ENCODE measurements at regions of chr10 and their contacts with region 1.

Region 1: GRCh38 chr10:24360282-24361127 is 151.6 kb downstream of the KIAA1217 start:
- DNase-seq: peak; percentile 49
- H3K4me3 ChIP-seq: no peak overlapping the region
- H3K27ac ChIP-seq: no peak overlapping the region
- H3K27me3 ChIP-seq: no peaks in the 10 kb centered on the region
- CTCF ChIP-seq: peak; percentile 87

Region 2: DNA sequence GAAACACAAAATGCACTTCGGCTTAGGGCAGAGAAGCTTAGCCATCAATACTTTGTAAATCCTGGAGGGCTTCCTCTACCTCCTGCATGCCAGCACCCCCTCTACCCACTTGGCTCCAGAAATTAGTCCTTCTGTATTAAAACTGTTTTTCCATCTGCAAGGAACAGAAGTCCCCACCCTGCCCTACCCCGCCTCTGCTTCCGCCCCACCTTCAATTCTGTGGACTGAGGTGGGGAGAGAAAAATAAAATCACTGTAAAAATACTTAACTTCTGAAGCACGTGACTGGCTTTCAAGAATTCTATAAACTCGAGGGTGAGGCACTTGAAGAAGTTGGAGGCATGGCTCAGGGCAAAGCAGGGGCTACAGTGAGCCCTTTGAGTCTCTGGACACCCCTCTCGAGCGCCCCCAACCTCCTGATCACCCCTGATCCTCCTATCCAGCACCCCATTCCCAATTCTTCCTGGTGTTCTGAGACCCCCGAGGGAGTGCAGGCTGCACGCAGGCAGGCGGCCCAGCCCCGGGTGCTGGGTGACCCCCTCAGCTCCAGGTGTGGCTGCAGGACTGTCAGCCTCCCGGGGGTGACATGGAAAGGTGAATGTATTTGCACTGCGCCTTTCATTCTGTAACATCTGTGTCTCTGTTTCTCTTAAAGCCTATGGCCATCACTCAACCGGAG is 158.9 kb before region 1 on chr10:
- CTCF ChIA-PET with region 1: interaction called, 15 read pairs
- POLR2A ChIA-PET with region 1: no interaction called
- DNase-seq: no peak
- H3K4me3 ChIP-seq: no peak overlapping the region
- H3K27ac ChIP-seq: no peak overlapping the region
- H3K27me3 ChIP-seq: peaks cover 4% of the 10 kb centered on the region
- CTCF ChIP-seq: no peak

Region 3: GRCh38 chr10:24344279-24344678 is 16.2 kb before region 1 on chr10:
- CTCF ChIA-PET with region 1: interaction called, 14 read pairs
- POLR2A ChIA-PET with region 1: no interaction called
- DNase-seq: peak; percentile 91
- H3K4me3 ChIP-seq: peak overlapping the region; percentile 8; the same call in 1 of the 2 replicates
- H3K27ac ChIP-seq: no peak overlapping the region
- H3K27me3 ChIP-seq: no peaks in the 10 kb centered on the region
- CTCF ChIP-seq: no peak

Region 4: GRCh38 chr10:24374134-24374915 is 13.8 kb after region 1 on chr10:
- CTCF ChIA-PET with region 1: interaction called, 13 read pairs
- POLR2A ChIA-PET with region 1: no interaction called
- DNase-seq: peak; percentile 58
- H3K4me3 ChIP-seq: no peak overlapping the region
- H3K27ac ChIP-seq: no peak overlapping the region
- H3K27me3 ChIP-seq: peaks cover 1% of the 10 kb centered on the region
- CTCF ChIP-seq: no peak

Region 5: DNA sequence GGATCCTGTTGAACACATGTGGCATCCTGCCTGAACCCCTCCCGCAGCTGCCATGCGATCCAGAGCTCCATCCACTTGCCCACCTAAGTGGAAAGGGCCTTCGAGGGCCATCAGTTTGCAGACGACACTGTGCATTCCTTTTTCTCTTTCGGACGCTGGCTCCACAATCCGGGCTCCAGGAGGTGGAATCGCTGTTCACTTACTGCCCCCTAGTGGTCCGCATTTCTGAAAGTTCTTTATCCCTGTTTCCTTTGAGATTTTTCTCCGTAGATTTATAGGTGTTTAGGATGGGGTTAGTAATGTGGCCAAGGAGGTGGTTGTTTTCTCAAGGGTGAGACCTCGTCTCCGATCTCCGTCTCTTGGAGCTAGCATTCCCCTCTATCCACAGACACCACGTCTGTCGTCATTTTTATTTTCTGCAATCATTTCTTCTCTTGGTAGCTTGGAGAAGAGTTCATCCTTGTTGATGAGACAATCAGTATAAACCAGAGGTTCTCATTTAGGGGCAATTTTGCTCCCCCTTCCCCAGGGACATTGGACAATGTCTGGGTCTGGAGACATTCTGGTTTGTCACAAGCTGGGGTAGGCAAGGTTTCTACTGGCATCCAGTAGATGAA is 158.6 kb after region 1 on chr10:
- CTCF ChIA-PET with region 1: interaction called, 55 read pairs
- POLR2A ChIA-PET with region 1: no interaction called
- DNase-seq: peak; percentile 21
- H3K4me3 ChIP-seq: no peak overlapping the region
- H3K27ac ChIP-seq: no peak overlapping the region
- H3K27me3 ChIP-seq: no peaks in the 10 kb centered on the region
- CTCF ChIP-seq: peak; percentile 86

Measured in AG04450 (cell line).